ENCODE measurements at regions of chr1 and their contacts with region 1.

Region 1: DNA sequence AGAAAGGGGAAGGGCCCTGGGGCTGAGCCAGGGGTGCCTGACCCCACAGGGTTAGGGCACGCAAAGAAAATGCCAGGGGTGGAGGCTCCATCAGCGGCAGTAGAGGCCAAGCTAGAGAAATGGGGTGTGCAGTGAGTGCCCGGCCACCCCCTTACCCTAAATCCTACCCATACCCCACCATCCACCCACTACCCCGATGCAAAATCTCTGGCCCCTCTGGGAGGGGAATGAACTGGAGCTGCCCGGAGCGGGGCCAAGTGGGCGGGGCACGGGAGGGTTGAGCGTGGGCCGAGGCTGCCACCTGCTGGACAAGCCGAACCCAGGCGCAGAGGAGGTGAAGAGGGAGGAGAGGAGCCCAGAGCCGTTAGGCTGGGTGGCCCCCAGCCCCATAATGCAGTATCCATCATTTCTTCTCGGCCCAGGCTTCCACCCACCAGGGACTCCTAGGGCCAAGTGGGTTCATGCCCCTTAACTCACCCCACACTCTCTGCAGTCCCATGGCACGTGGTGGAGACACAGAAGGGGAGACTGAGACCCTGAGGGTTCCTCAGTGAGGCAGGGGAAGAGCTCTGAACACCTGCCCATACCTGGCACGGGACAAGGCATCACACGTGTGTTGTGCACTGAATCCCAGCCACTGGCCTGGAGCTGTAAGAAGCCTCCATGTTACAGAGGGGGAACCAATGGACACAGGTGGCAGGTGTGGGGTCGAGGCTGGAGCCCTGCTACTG is 1.4 kb upstream of the C1QC start:
- DNase-seq: peak; percentile 48
- H3K4me3 Mint-ChIP-seq: no peak overlapping the region
- H3K27ac Mint-ChIP-seq: no peak overlapping the region
- H3K4me1 Mint-ChIP-seq: no peaks in the 10 kb centered on the region
- H3K27me3 Mint-ChIP-seq: no peaks in the 10 kb centered on the region

Region 2: GRCh38 chr1:22131875-22132486 is 510.1 kb before region 1 on chr1:
- intact Hi-C with region 1: loop called (anchors 1 kb)
- DNase-seq: peak; percentile 23
- H3K4me3 Mint-ChIP-seq: no peak overlapping the region
- H3K27ac Mint-ChIP-seq: no peak overlapping the region
- H3K4me1 Mint-ChIP-seq: no peaks in the 10 kb centered on the region
- H3K27me3 Mint-ChIP-seq: no peaks in the 10 kb centered on the region

Region 3: GRCh38 chr1:22500058-22500457 is 142.0 kb before region 1 on chr1:
- intact Hi-C with region 1: no loop called
- DNase-seq: no peak
- H3K4me3 Mint-ChIP-seq: no peak overlapping the region
- H3K27ac Mint-ChIP-seq: no peak overlapping the region
- H3K4me1 Mint-ChIP-seq: no peaks in the 10 kb centered on the region
- H3K27me3 Mint-ChIP-seq: no peaks in the 10 kb centered on the region

Measured in activated T-helper 1 cell treated with anti-CD3 and anti-CD28 coated beads, Interleukin-12 subunit alpha, Interleukin-12 subunit beta, Interleukin-2, Interleukin-4 antibody, amounts not matched to agents 30 ng/mL and 10 ng/mL and 1 ng/mL, durations not matched to agents 14 hours and 24 hours and 36 hours (primary cell).